Endothelial cell of umbilical vein (primary cell): ENCODE measurements at regions of chr10 and their contacts with region 1.

Region 1: GRCh38 chr10:17062955-17063484 is 66.6 kb downstream of the CUBN start:
- DNase-seq: peak; percentile 90
- H3K4me3 ChIP-seq: peak overlapping the region in 1 of 3 experiments; percentile 20
- H3K27ac ChIP-seq: peak overlapping the region; percentile 100
- H3K4me1 ChIP-seq: peaks cover 76% of the 10 kb centered on the region
- H3K27me3 ChIP-seq: no peaks in the 10 kb centered on the region
- CTCF ChIP-seq: no peak
- POLR2A ChIP-seq: peak; percentile 44

Region 2: DNA sequence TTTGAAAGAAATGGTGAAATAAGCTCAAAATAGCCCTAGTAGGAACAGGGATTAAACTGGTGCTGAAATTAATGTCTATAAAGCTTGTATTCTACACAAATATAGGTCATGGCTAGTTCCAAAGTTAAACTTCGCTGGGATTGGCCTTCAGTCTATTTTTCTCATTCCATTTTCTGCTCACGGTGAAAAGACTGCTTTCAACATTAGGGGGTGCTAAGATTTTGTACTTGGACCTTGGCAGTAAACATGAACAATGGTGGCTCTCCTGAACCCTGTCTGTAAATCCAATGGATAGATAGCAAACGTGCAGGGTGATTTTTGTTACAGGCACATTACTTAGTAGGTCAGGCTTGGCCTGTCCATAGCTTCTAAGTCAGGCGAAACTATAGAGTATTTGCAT is 209.8 kb before region 1 on chr10:
- CTCF ChIA-PET with region 1: interaction called, 6 read pairs
- POLR2A ChIA-PET with region 1: no interaction called
- dilution Hi-C with region 1: no loop called
- intact Hi-C with region 1: loop called (anchors 5 kb)
- DNase-seq: peak; percentile 73
- H3K4me3 ChIP-seq: no peak overlapping the region
- H3K27ac ChIP-seq: no peak overlapping the region
- H3K4me1 ChIP-seq: peaks cover 23% of the 10 kb centered on the region
- H3K27me3 ChIP-seq: no peaks in the 10 kb centered on the region
- CTCF ChIP-seq: peak; percentile 35 to 39
- POLR2A ChIP-seq: no peak

Region 3: GRCh38 chr10:16950656-16951601 is 112.1 kb before region 1 on chr10:
- CTCF ChIA-PET with region 1: no interaction called
- POLR2A ChIA-PET with region 1: interaction called, 3 read pairs
- dilution Hi-C with region 1: no loop called
- intact Hi-C with region 1: loop called (anchors 1 kb)
- DNase-seq: peak; percentile 89
- H3K4me3 ChIP-seq: no peak overlapping the region
- H3K27ac ChIP-seq: peak overlapping the region; percentile 66
- H3K4me1 ChIP-seq: peaks cover 40% of the 10 kb centered on the region
- H3K27me3 ChIP-seq: no peaks in the 10 kb centered on the region
- CTCF ChIP-seq: no peak
- POLR2A ChIP-seq: no peak

Region 4: DNA sequence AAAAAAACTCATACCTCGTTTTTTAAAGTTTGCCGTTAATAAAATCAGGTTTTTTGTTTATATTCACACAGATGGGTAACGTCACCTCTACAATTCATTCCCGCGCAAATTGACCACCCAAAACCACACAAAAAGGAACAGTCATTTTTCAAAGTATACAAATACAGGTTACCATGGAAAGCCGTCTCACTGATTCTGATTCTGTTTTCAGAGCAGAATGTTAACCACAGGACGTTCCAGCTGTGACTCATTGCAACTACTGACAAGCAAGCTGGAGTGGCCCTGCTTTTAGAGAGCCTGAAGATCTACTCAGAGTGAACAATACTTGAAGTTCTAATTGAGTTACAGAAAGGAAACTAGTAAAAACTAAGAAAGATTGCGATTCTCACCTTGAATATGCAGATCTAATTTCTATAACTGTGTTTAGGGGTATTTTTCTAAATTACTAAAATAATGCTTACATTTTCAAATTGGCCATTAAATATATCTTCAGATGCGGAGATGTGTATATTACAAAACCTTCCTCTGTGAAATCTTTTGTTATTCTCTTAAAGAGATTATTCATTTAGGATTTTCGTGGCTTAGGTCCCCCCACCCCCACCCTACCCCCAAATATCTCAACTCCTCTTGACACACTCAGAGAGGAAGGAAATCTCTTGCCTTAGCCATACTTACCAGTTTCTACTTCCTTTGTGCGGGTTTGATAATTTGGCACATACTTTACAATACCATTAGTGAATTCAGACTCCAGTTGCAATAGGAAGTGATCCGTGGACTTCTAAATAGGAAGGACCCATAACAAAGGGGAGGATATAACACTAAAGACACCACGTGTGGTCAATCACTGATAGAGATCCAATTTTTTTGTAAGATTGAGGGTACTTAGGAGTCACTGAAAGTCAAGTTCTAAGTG is 39.4 kb before region 1 on chr10:
- CTCF ChIA-PET with region 1: interaction called, 4 read pairs
- POLR2A ChIA-PET with region 1: no interaction called
- dilution Hi-C with region 1: no loop called
- intact Hi-C with region 1: loop called (anchors 1 kb)
- DNase-seq: peak; percentile 96
- H3K4me3 ChIP-seq: peak overlapping the region in 1 of 3 experiments; percentile 35
- H3K27ac ChIP-seq: peak overlapping the region; percentile 72
- H3K4me1 ChIP-seq: peaks cover 51% of the 10 kb centered on the region
- H3K27me3 ChIP-seq: no peaks in the 10 kb centered on the region
- CTCF ChIP-seq: no peak
- POLR2A ChIP-seq: peak; percentile 22

Region 5: GRCh38 chr10:17101257-17101909 is 38.4 kb after region 1 on chr10:
- CTCF ChIA-PET with region 1: no interaction called
- POLR2A ChIA-PET with region 1: no interaction called
- dilution Hi-C with region 1: no loop called
- intact Hi-C with region 1: loop called (anchors 2 kb)
- DNase-seq: peak; percentile 70
- H3K4me3 ChIP-seq: no peak overlapping the region
- H3K27ac ChIP-seq: peak overlapping the region; percentile 65
- H3K4me1 ChIP-seq: peaks cover 16% of the 10 kb centered on the region
- H3K27me3 ChIP-seq: no peaks in the 10 kb centered on the region
- CTCF ChIP-seq: no peak
- POLR2A ChIP-seq: no peak

Region 6: GRCh38 chr10:17228091-17228940 is 165.3 kb after region 1 on chr10 and contains the start of gene VIM:
- CTCF ChIA-PET with region 1: interaction called, 17 read pairs
- POLR2A ChIA-PET with region 1: interaction called, 10 read pairs
- dilution Hi-C with region 1: no loop called
- intact Hi-C with region 1: loop called (anchors 1 kb)
- DNase-seq: peak; percentile 97
- H3K4me3 ChIP-seq: peak within 1 kb of the TSS; percentile 66 to 87 (median 83)
- H3K27ac ChIP-seq: peak within 1 kb of the TSS; percentile 99
- H3K4me1 ChIP-seq: peaks cover 24% of the 10 kb centered on the region
- H3K27me3 ChIP-seq: no peaks in the 10 kb centered on the region
- CTCF ChIP-seq: peak in 1 of 2 donors; percentile 16
- POLR2A ChIP-seq: peak; percentile 92
- total RNA-seq, gene VIM: 5,754 and 5,781 TPM in 2 replicates